ENCODE measurements at regions of chr6 and their contacts with region 1.

Region 1: GRCh38 chr6:25179051-25179778 is 100.0 kb upstream of the CARMIL1 start:
- DNase-seq: peak; percentile 75
- H3K4me3 ChIP-seq: no peak overlapping the region
- H3K27me3 ChIP-seq: no peaks in the 10 kb centered on the region
- CTCF ChIP-seq: no peak

Region 2: GRCh38 chr6:25050356-25050755 is 128.9 kb before region 1 on chr6:
- CTCF ChIA-PET with region 1: no interaction called
- POLR2A ChIA-PET with region 1: no interaction called
- DNase-seq: peak; percentile 41
- H3K4me3 ChIP-seq: no peak overlapping the region
- H3K27me3 ChIP-seq: no peaks in the 10 kb centered on the region
- CTCF ChIP-seq: no peak

Region 3: DNA sequence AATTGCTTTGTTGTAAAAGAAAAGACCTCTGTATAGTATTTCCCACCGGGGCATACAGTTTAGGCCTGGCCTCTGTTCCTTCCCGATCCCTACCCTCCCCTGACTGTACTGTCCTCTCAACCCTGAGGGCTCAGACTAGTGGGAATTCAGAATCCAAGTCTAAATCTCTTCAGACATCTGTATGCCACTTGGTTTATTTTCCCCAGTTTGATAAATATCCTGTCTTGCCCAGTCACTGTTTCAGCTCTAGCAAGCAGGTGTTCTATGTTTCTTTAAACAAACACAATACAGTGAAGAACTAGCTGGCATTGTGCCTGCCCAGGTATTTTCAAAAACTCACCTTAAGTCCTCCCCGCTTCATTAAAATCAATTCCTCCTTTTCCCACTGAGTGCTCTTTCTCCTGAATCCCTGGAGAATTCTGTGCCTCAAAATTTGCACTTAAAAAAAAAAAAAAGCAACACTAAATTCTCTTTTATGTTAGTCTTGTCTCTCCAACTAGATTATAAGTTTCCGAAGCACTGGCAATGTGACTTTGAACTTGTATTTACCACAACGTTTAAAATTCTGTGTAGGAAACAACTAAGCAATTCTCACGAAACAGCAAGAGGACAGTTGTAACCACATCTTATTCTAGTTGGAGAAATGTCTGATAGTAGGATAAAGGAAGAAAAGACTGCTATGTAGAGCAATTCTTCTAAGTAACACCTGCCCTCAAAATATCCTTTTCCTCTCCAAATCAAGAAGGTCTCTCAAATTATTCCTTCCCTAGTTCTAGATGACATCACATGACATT is 12.1 kb before region 1 on chr6:
- CTCF ChIA-PET with region 1: no interaction called
- POLR2A ChIA-PET with region 1: no interaction called
- DNase-seq: no peak
- H3K4me3 ChIP-seq: no peak overlapping the region
- H3K27me3 ChIP-seq: no peaks in the 10 kb centered on the region
- CTCF ChIP-seq: no peak

Region 4: DNA sequence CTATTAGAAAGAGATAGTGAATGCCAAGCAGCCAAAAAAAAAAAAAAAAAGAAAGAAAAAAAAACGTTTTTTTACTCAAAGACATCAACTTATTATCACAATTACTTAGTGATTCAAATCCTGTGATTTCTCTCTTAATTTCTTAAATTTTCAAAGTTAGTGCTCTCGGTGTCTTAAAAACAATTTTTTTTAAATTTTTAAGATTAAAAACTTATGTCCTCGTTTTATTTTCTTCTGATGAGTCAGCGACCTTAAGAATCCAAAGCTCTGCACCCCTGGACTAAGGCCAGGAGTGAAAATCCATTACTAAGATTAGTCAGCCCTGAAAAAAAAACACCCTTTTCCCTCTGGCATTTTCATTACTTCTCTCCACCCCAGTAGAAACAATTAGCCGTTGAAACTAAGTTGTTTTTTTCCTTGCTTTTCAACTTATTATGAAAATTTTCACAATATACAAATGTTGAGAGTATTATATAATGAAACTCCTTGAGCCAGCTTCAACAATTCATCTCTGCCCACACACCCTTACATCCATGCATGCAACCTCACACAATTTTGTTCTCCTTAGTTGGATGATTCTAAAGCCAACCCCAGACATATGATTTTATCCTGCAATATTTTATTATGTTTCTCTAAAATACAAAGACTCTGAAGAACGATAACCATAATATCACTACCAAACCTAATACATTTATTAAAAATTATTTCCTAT is 14.4 kb after region 1 on chr6:
- CTCF ChIA-PET with region 1: interaction called, 11 read pairs
- POLR2A ChIA-PET with region 1: no interaction called
- DNase-seq: peak; percentile 92
- H3K4me3 ChIP-seq: no peak overlapping the region
- H3K27me3 ChIP-seq: no peaks in the 10 kb centered on the region
- CTCF ChIP-seq: no peak

Measured in BJ (cell line).